ENCODE measurements at regions of chr12 and their contacts with region 1.

Region 1: DNA sequence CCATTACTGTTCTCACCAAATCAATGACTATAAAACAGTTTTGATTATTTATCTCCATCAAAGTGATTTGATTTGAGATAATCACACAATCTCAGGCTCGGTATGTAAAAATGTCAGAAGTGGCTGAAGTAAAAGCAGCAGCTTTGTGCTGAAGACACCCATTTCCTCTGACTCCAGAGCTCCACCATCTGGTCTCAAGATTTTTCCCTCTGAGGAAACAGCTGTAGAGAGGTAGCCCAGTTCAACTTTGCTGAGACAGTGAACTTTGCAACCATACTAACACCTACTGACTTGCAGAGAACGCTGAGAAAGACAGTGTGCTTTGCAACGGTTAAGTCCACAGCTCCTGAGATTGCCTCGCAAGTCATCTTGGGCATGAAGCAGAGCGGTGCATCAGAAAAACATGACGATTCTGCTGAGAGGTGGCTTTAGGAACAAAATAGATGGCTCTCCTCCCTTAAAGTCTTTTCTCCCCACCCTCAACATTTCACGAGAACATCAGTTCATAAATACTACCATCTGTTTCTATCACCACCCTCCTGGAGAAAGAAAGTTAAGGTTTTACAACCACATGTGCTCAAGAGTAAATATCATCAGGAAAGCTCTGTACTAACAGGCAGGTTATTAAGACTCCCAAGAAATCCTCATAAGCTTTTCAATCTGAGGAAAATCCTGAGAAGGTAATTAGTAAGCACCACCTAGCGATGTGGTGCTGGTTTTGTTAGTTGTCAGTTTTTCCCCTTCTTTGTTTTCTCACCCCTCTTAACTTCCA is 34.8 kb downstream of the HIGD1C start:
- DNase-seq: peak in 1 of 3 donors; percentile 63
- ATAC-seq: peak; percentile 87 to 96 (median 92)
- H3K4me3 ChIP-seq: no peak overlapping the region
- H3K27ac ChIP-seq: peak overlapping the region in 1 of 3 donors; percentile 78
- H3K4me1 ChIP-seq: peaks cover 0 to 24% (median 5%) of the 10 kb centered on the region in 4 donors
- H3K27me3 ChIP-seq: no peaks in the 10 kb centered on the region
- CTCF ChIP-seq: peak; percentile 45 to 73 (median 67)
- POLR2A ChIP-seq: no peak

Region 2: GRCh38 chr12:50725011-50725942 is 261.9 kb before region 1 on chr12:
- intact Hi-C with region 1: no loop called
- DNase-seq: no peak
- ATAC-seq: peak; percentile 46 to 77 (median 52)
- H3K4me3 ChIP-seq: no peak overlapping the region
- H3K27ac ChIP-seq: peak overlapping the region in 1 of 3 donors; percentile 53
- H3K4me1 ChIP-seq: peaks cover 0 to 29% (median 0%) of the 10 kb centered on the region in 4 donors
- H3K27me3 ChIP-seq: no peaks in the 10 kb centered on the region
- CTCF ChIP-seq: no peak
- POLR2A ChIP-seq: no peak

Region 3: GRCh38 chr12:50825372-50825838 is 161.7 kb before region 1 on chr12:
- intact Hi-C with region 1: loop called in 1 of 2 experiments (anchors 10 kb)
- DNase-seq: no peak
- ATAC-seq: peak; percentile 88 to 92 (median 88)
- H3K4me3 ChIP-seq: no peak overlapping the region
- H3K27ac ChIP-seq: peak overlapping the region in 2 of 3 donors; percentile 70 to 76
- H3K4me1 ChIP-seq: peaks cover 0 to 21% (median 2%) of the 10 kb centered on the region in 4 donors
- H3K27me3 ChIP-seq: no peaks in the 10 kb centered on the region
- CTCF ChIP-seq: peak; percentile 36 to 79 (median 56)
- POLR2A ChIP-seq: no peak

Region 4: GRCh38 chr12:50845021-50845647 is 142.0 kb before region 1 on chr12:
- intact Hi-C with region 1: no loop called
- DNase-seq: no peak
- ATAC-seq: no peak
- H3K4me3 ChIP-seq: no peak overlapping the region
- H3K27ac ChIP-seq: no peak overlapping the region
- H3K4me1 ChIP-seq: no peaks in the 10 kb centered on the region
- H3K27me3 ChIP-seq: no peaks in the 10 kb centered on the region
- CTCF ChIP-seq: no peak
- POLR2A ChIP-seq: no peak

Region 5: GRCh38 chr12:50924439-50925341 is 62.5 kb before region 1 on chr12:
- intact Hi-C with region 1: loop called in 1 of 2 experiments (anchors 10 kb)
- DNase-seq: peak; percentile 86 to 95 (median 87)
- ATAC-seq: peak; percentile 77 to 90 (median 82)
- H3K4me3 ChIP-seq: peak overlapping the region; percentile 64 to 80 (median 74)
- H3K27ac ChIP-seq: peak overlapping the region; percentile 76 to 82 (median 80)
- H3K4me1 ChIP-seq: peaks cover 0 to 29% (median 13%) of the 10 kb centered on the region in 4 donors
- H3K27me3 ChIP-seq: no peaks in the 10 kb centered on the region
- CTCF ChIP-seq: no peak
- POLR2A ChIP-seq: peak; percentile 66

Region 6: GRCh38 chr12:50934981-50935807 is 52.0 kb before region 1 on chr12:
- intact Hi-C with region 1: no loop called
- DNase-seq: no peak
- ATAC-seq: peak; percentile 40 to 64 (median 52)
- H3K4me3 ChIP-seq: no peak overlapping the region
- H3K27ac ChIP-seq: peak overlapping the region; percentile 56 to 80 (median 66)
- H3K4me1 ChIP-seq: peaks cover 0 to 69% (median 24%) of the 10 kb centered on the region in 4 donors
- H3K27me3 ChIP-seq: no peaks in the 10 kb centered on the region
- CTCF ChIP-seq: no peak
- POLR2A ChIP-seq: no peak

Measured in right lobe of liver (tissue), 6 donors.